ENCODE measurements at regions of chr10 and their contacts with region 1.

Region 1: GRCh38 chr10:130110246-130111112 is at the start of gene C10orf143:
- DNase-seq: peak; percentile 96 to 100 (median 99)
- ATAC-seq: peak; percentile 89
- H3K4me3 ChIP-seq: peak within 1 kb of the TSS; percentile 100
- H3K4me3 Mint-ChIP-seq: peak within 1 kb of the TSS; percentile 90 to 99 (median 98)
- H3K27ac ChIP-seq: peak within 1 kb of the TSS; percentile 88
- H3K27ac Mint-ChIP-seq: peak within 1 kb of the TSS; percentile 90 to 99 (median 98)
- H3K4me1 ChIP-seq: peaks cover 19 to 21% of the 10 kb centered on the region in 2 donors
- H3K4me1 Mint-ChIP-seq: peaks cover 27 to 67% (median 53%) of the 10 kb centered on the region in 7 donors
- H3K27me3 ChIP-seq: no peaks in the 10 kb centered on the region
- H3K27me3 Mint-ChIP-seq: no peaks in the 10 kb centered on the region
- total RNA-seq, gene C10orf143: 2.6 to 12.5 (median 10.2) TPM

Region 2: DNA sequence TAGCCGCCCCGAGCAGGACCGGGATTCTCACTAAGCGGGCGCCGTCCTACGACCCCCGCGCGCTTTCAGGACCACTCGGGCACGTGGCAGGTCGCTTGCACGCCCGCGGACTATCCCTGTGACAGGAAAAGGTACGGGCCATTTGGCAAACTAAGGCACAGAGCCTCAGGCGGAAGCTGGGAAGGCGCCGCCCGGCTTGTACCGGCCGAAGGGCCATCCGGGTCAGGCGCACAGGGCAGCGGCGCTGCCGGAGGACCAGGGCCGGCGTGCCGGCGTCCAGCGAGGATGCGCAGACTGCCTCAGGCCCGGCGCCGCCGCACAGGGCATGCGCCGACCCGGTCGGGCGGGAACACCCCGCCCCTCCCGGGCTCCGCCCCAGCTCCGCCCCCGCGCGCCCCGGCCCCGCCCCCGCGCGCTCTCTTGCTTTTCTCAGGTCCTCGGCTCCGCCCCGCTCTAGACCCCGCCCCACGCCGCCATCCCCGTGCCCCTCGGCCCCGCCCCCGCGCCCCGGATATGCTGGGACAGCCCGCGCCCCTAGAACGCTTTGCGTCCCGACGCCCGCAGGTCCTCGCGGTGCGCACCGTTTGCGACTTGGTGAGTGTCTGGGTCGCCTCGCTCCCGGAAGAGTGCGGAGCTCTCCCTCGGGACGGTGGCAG is 643.6 kb before region 1 on chr10 and contains the start of gene MGMT:
- CTCF ChIA-PET with region 1: interaction called, 4 read pairs
- POLR2A ChIA-PET with region 1: interaction called, 15 read pairs
- intact Hi-C with region 1: loop called (anchors 1 kb)
- DNase-seq: peak; percentile 91 to 98 (median 96)
- ATAC-seq: peak; percentile 99
- H3K4me3 ChIP-seq: peak within 1 kb of the TSS; percentile 74
- H3K4me3 Mint-ChIP-seq: peak within 1 kb of the TSS; percentile 74 to 90 (median 87)
- H3K27ac ChIP-seq: peak within 1 kb of the TSS; percentile 85
- H3K27ac Mint-ChIP-seq: peak within 1 kb of the TSS; percentile 71 to 91 (median 84)
- H3K4me1 ChIP-seq: peaks cover 11 to 13% of the 10 kb centered on the region in 2 donors
- H3K4me1 Mint-ChIP-seq: peaks cover 8 to 31% (median 26%) of the 10 kb centered on the region in 7 donors
- H3K27me3 ChIP-seq: no peaks in the 10 kb centered on the region
- H3K27me3 Mint-ChIP-seq: no peaks in the 10 kb centered on the region
- total RNA-seq, gene MGMT: 17.6 to 23.9 (median 21.8) TPM

Region 3: DNA sequence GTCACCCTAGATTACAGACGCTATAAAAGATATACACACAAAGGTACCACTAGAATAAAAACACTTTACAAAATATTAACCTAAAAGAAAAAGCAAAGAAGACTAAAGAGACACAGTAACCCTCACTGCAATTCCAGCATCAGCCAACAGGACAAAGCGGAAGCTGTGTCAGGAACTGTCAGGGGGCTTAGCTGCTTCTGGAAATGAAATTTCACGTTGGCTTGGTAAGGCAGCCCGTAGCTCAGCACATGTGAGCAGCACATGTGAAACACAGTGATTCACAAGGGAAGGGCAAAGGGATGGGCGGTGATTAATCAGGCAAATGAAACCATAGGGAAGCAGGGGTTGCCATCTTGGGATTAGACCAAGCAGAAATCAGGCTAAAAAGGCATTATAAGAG is 448.1 kb before region 1 on chr10:
- CTCF ChIA-PET with region 1: no interaction called
- POLR2A ChIA-PET with region 1: no interaction called
- intact Hi-C with region 1: no loop called
- DNase-seq: no peak
- ATAC-seq: no peak
- H3K4me3 ChIP-seq: no peak overlapping the region
- H3K4me3 Mint-ChIP-seq: no peak overlapping the region
- H3K27ac ChIP-seq: no peak overlapping the region
- H3K27ac Mint-ChIP-seq: no peak overlapping the region
- H3K4me1 ChIP-seq: no peaks in the 10 kb centered on the region
- H3K4me1 Mint-ChIP-seq: peaks cover 0 to 14% (median 0%) of the 10 kb centered on the region in 7 donors
- H3K27me3 ChIP-seq: no peaks in the 10 kb centered on the region
- H3K27me3 Mint-ChIP-seq: no peaks in the 10 kb centered on the region

Region 4: GRCh38 chr10:129863201-129863663 is 247.2 kb before region 1 on chr10:
- CTCF ChIA-PET with region 1: no interaction called
- POLR2A ChIA-PET with region 1: no interaction called
- intact Hi-C with region 1: no loop called
- DNase-seq: no peak
- ATAC-seq: no peak
- H3K4me3 ChIP-seq: no peak overlapping the region
- H3K4me3 Mint-ChIP-seq: no peak overlapping the region
- H3K27ac ChIP-seq: no peak overlapping the region
- H3K27ac Mint-ChIP-seq: no peak overlapping the region
- H3K4me1 ChIP-seq: no peaks in the 10 kb centered on the region
- H3K4me1 Mint-ChIP-seq: no peaks in the 10 kb centered on the region
- H3K27me3 ChIP-seq: no peaks in the 10 kb centered on the region
- H3K27me3 Mint-ChIP-seq: peaks cover 0 to 7% (median 0%) of the 10 kb centered on the region in 5 donors

Region 5: DNA sequence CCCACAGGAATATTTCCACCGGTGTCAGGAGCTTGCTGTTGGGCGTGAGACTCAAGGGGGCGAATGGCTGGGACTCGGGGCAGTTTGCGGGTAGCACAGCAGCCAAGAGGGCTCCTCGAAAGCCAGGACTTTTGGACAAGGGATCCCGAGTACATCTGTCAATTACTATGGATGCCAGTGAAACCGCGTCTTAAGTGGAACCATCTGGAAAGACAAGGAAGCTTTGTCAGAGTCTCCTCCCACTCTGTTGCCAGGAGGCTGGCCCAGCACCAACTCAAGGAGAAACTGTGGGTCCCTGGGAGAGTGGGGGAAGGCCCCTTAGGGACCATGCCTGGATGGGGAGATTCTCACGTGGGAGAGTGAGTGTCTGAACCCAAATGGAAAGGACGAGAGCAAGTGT is 56.9 kb before region 1 on chr10:
- CTCF ChIA-PET with region 1: no interaction called
- POLR2A ChIA-PET with region 1: no interaction called
- intact Hi-C with region 1: no loop called
- DNase-seq: no peak
- ATAC-seq: no peak
- H3K4me3 ChIP-seq: no peak overlapping the region
- H3K4me3 Mint-ChIP-seq: no peak overlapping the region
- H3K27ac ChIP-seq: no peak overlapping the region
- H3K27ac Mint-ChIP-seq: no peak overlapping the region
- H3K4me1 ChIP-seq: no peaks in the 10 kb centered on the region
- H3K4me1 Mint-ChIP-seq: no peaks in the 10 kb centered on the region
- H3K27me3 ChIP-seq: no peaks in the 10 kb centered on the region
- H3K27me3 Mint-ChIP-seq: peaks cover 0 to 4% (median 0%) of the 10 kb centered on the region in 5 donors

Region 6: GRCh38 chr10:130136226-130137089 is 26.0 kb after region 1 on chr10 and contains the start of gene GLRX3:
- CTCF ChIA-PET with region 1: interaction called, 15 read pairs
- POLR2A ChIA-PET with region 1: interaction called, 74 read pairs
- intact Hi-C with region 1: loop called (anchors 1 kb)
- DNase-seq: peak; percentile 79 to 95 (median 87)
- ATAC-seq: peak; percentile 99
- H3K4me3 ChIP-seq: peak within 1 kb of the TSS; percentile 63
- H3K4me3 Mint-ChIP-seq: peak within 1 kb of the TSS; percentile 81 to 95 (median 90)
- H3K27ac ChIP-seq: peak within 1 kb of the TSS; percentile 86
- H3K27ac Mint-ChIP-seq: peak within 1 kb of the TSS in 7 of 9 donors; percentile 48 to 93 (median 85)
- H3K4me1 ChIP-seq: peaks cover 23 to 32% of the 10 kb centered on the region in 2 donors
- H3K4me1 Mint-ChIP-seq: peaks cover 28 to 50% (median 46%) of the 10 kb centered on the region in 7 donors
- H3K27me3 ChIP-seq: no peaks in the 10 kb centered on the region
- H3K27me3 Mint-ChIP-seq: peaks cover 0 to 13% (median 6%) of the 10 kb centered on the region in 5 donors
- total RNA-seq, gene GLRX3: 30.1 to 72.9 (median 37.0) TPM

Region 7: DNA sequence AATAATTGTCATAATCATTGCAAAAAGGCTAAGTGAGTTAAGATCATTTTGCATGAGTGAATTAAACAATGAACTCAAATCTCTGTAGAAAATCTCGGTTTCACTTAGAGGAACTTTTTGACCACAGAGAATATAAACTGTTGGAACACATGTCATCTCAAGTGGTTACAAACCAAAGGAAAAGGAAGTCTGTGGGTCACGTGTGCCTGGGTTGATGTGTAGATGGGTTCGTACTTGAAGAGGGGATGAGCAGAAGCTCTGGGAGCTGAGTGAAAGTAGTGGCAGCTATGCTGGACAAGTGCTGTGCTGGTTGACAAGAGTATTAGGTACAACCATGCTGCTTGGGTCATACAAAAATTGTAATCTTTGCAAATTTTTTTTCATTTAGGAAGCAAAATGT is 60.7 kb after region 1 on chr10:
- CTCF ChIA-PET with region 1: no interaction called
- POLR2A ChIA-PET with region 1: no interaction called
- intact Hi-C with region 1: loop called (anchors 1 to 2 kb)
- DNase-seq: peak in 6 of 9 donors; percentile 54 to 70 (median 60)
- ATAC-seq: peak; percentile 83
- H3K4me3 ChIP-seq: no peak overlapping the region
- H3K4me3 Mint-ChIP-seq: peak overlapping the region; percentile 3 to 80 (median 54)
- H3K27ac ChIP-seq: no peak overlapping the region
- H3K27ac Mint-ChIP-seq: peak overlapping the region in 8 of 9 donors; percentile 2 to 63 (median 13)
- H3K4me1 ChIP-seq: peaks cover 18 to 28% of the 10 kb centered on the region in 2 donors
- H3K4me1 Mint-ChIP-seq: peaks cover 22 to 76% (median 64%) of the 10 kb centered on the region in 7 donors
- H3K27me3 ChIP-seq: no peaks in the 10 kb centered on the region
- H3K27me3 Mint-ChIP-seq: no peaks in the 10 kb centered on the region

Region 8: GRCh38 chr10:130301021-130301892 is 190.8 kb after region 1 on chr10:
- CTCF ChIA-PET with region 1: no interaction called
- POLR2A ChIA-PET with region 1: interaction called, 23 read pairs
- intact Hi-C with region 1: loop called in 1 of 2 experiments (anchors 2 kb)
- DNase-seq: peak; percentile 8 to 81 (median 58)
- ATAC-seq: peak; percentile 78
- H3K4me3 ChIP-seq: peak overlapping the region; percentile 44
- H3K4me3 Mint-ChIP-seq: peak overlapping the region in 9 of 10 donors; percentile 31 to 94 (median 78)
- H3K27ac ChIP-seq: peak overlapping the region; percentile 61
- H3K27ac Mint-ChIP-seq: peak overlapping the region; percentile 13 to 96 (median 76)
- H3K4me1 ChIP-seq: peaks cover 0 to 4% of the 10 kb centered on the region in 2 donors
- H3K4me1 Mint-ChIP-seq: peaks cover 0 to 23% (median 12%) of the 10 kb centered on the region in 7 donors
- H3K27me3 ChIP-seq: no peaks in the 10 kb centered on the region
- H3K27me3 Mint-ChIP-seq: peaks cover 0 to 5% (median 0%) of the 10 kb centered on the region in 5 donors